ENCODE measurements at regions of chr19 and their contacts with region 1.

Region 1: GRCh38 chr19:49718511-49718910 is 27.6 kb downstream of the CPT1C start:
- H3K4me3 ChIP-seq: no peak overlapping the region
- H3K27ac ChIP-seq: no peak overlapping the region
- H3K4me1 ChIP-seq: no peaks in the 10 kb centered on the region
- CTCF ChIP-seq: no peak

Region 2: DNA sequence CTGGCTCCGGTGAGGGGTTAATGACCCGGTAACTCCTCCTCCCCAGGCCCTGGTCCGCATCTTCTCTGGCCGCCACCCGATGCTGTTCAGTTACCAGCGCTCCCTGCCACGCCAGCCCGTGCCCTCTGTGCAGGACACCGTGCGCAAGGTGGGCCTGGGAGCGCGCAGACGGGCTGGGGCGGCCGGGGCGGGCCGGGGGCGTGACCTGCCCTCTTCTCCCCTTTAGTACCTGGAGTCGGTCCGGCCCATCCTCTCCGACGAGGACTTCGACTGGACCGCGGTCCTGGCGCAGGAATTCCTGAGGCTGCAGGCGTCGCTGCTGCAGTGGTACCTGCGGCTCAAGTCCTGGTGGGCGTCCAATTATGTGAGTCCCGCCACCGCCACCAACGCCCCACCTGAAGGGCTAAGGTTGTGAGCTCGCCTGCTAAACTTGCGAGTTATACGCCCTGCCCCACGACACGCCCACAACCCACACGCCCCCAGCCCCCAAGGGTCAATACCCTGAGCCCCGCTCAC is 17.2 kb before region 1 on chr19:
- CTCF ChIA-PET with region 1: interaction called, 11 read pairs
- POLR2A ChIA-PET with region 1: interaction called, 3 read pairs
- H3K4me3 ChIP-seq: no peak overlapping the region
- H3K27ac ChIP-seq: no peak overlapping the region
- H3K4me1 ChIP-seq: no peaks in the 10 kb centered on the region
- CTCF ChIP-seq: no peak

Region 3: DNA sequence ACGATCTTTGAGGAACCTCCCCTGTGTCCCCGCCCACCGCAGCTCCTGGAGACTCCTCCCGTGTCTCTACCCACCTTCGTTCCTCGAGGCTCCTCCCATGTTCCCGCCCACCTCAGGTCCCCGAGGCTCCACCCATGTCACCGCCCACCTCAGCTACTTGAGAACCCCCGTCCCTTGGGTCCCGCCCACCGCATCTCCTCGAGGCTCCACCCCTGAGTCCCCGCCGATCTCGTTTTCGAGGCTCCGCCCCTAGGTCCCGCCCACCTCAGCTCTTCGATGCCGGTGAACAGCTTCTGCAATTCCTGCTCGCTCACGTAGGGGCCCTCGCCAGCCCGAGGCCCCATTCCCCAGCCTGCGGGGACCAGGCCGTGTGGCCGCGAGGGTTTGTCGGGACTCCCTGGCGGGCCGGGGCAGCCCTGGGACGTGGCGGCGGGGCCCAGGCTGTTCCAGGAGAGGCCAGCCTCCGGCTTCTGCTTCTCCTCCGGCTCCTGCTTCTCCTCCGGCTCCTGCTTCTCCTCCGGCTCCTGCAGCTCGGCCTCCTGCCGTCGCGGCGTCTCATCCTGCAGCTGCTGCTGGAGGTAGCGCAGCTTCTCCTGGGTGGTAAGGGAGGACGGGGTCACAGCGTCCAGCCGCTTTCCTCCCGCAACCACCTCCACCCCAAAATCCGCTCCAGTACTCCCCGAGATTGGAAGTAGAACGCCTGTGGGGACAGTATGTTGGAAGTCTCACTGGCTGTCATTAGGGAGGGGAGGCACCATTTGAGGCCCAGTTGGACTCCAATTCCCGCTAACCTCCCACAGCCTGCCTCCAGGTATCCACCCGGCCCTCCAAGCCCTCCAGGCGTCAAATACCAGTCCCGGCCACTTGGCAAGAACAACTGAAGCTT is 27.9 kb after region 1 on chr19:
- CTCF ChIA-PET with region 1: interaction called, 12 read pairs
- POLR2A ChIA-PET with region 1: no interaction called
- H3K4me3 ChIP-seq: no peak overlapping the region
- H3K27ac ChIP-seq: no peak overlapping the region
- H3K4me1 ChIP-seq: no peaks in the 10 kb centered on the region
- CTCF ChIP-seq: no peak

Region 4: DNA sequence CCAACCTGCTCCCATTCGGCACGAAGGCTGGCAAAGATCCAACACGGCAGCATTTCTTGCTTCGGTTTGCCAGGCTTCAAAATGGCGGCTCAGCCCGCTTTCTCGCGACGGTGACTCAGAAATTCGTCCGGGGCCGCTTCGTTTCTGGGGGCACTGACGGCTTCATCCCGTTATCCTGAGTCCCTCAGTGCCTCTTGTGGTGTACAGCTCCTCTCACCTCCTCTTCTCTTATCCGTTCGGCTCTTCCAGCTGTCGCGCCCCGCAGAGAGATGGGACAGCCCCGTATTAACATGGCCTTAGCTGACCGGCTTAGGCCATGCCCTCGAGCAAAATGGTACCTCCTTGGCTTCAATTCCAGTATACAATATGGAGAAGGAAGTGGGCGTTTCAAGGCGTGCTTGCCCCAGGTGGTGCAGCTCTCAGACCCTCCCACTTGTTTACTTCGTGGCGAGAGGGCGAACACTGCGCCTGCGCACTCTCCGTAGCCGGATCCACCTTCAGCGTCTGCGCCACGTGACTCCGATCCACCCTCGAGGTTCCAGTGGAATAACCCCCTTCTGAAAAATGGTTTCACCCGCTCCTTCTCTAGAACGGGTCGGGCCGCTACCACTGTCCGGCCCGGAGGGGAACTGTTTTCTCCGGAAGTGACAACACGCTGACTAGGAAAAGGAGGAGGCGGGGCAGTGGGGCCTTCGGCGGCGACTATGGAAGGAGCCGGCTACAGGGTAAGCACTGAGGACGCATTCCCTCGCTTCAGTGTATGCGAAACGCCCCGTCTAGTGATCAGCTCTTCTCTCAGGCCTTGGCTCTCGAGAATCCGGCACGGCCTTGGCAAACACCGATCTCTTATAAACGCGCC is 158.7 kb after region 1 on chr19 and contains the starts of genes AKT1S1 and TBC1D17:
- CTCF ChIA-PET with region 1: no interaction called
- POLR2A ChIA-PET with region 1: no interaction called
- H3K4me3 ChIP-seq: peak within 1 kb of the TSS; percentile 79
- H3K27ac ChIP-seq: peak within 1 kb of the TSS; percentile 94
- H3K4me1 ChIP-seq: peaks cover 9% of the 10 kb centered on the region
- CTCF ChIP-seq: no peak

Region 5: GRCh38 chr19:49911381-49912145 is 193.1 kb after region 1 on chr19:
- CTCF ChIA-PET with region 1: no interaction called
- POLR2A ChIA-PET with region 1: no interaction called
- H3K4me3 ChIP-seq: no peak overlapping the region
- H3K27ac ChIP-seq: peak overlapping the region; percentile 34; the same call in 1 of the 2 replicates
- H3K4me1 ChIP-seq: no peaks in the 10 kb centered on the region
- CTCF ChIP-seq: no peak

Measured in HEK293 (cell line).